Mucosa of descending colon (tissue), 3 donors: ENCODE measurements at regions of chr1 and their contacts with region 1.

Region 1: DNA sequence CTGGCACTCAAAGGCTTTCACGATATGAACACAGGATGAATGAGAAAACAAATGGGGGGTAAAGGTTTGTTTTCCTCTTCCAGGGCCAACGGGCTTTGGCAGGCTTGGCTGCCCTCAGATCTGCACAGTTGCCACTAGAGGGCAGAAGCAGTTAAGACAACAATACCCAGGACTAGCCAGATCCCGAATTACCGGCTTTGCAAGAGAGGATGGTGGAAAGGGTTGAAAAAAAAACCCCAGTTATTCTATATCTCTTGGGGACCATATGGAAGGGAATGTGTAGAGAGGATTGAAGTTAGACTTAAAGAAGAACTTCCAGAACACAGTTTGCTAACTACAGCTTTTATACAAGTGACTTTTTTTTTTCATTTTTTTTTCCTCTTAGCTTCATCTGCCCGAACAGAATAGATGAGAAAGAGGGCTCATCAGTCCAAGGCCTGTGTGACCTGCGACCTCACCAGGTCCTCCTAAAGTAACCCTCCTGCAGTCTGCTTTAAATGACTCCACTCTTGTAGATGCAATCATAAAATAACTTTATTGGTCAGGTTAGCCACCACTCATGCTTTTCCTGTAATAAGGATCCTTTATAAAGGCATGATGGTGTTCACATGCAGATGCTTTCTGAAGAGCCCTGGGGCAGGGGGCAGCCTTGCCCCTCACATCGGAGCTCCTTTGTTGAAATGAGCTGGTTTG is 10.7 kb downstream of the FMOD start:
- DNase-seq: peak; percentile 68 to 86 (median 74)
- ATAC-seq: peak; percentile 86
- H3K4me3 ChIP-seq: no peak overlapping the region
- H3K4me1 ChIP-seq: peaks cover 11% of the 10 kb centered on the region
- CTCF ChIP-seq: peak; percentile 65

Region 2: DNA sequence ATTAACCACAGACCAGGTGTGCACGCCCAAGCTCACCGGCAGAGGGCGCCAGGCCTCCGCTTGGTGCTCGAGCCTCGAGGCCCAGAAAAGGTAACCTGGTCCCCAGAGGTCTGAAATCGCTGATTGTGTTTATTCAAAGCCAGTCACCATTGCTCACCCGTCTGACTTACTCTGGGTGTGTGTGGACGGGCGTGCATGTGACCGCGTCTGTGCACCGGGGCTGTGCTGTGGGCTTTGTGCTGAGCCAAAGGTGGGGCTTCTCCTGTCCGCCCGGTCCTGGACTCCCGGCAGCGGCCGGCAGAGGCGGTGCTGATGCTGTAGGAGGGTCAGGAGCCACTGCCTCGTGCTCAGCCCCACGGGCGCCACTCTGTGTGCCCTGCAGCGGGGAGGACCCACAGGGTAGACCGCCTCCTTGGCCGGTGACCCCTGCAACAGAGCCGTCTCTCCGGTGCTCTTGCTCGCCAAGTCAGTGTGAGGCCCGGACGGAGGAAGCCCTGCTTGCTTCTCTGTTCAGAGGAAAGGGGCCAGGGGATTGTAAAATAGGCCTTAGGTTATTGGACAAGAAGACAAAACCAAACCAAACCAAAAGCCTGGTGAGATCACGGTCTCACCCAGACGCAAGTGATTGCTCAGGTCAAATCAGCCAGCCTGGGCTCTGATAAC is 66.9 kb before region 1 on chr1:
- intact Hi-C with region 1: loop called in 1 of 2 experiments (anchors 5 kb)
- DNase-seq: peak; percentile 92 to 95 (median 94)
- ATAC-seq: peak; percentile 88
- H3K4me3 ChIP-seq: no peak overlapping the region
- H3K4me1 ChIP-seq: peaks cover 34% of the 10 kb centered on the region
- CTCF ChIP-seq: peak; percentile 96

Region 3: DNA sequence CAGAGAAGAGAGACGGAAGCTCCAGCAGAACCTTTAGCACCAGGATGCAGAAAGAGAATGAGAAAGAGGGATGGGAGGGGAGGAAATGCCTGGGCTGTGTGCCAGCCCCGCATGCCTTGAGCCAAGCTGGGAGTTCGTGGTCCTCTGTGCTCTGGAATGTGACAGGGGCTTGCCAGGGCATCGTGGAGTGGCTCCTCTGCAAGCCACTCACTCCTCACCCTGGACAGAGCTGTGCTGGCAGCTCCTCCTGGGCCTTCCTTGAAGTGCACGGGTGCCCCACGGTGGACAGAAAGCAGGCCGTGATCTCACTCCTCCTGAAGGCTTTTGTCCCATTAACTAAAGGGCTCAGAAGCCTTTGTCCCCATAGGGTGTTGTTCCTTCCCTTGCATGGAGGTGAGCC is 100.5 kb after region 1 on chr1:
- intact Hi-C with region 1: loop called (anchors 2 to 5 kb)
- DNase-seq: peak; percentile 80 to 84 (median 83)
- ATAC-seq: peak; percentile 91
- H3K4me3 ChIP-seq: no peak overlapping the region
- H3K4me1 ChIP-seq: peaks cover 19% of the 10 kb centered on the region
- CTCF ChIP-seq: peak; percentile 45

Region 4: GRCh38 chr1:203480525-203481084 is 140.3 kb after region 1 on chr1:
- intact Hi-C with region 1: loop called (anchors 5 to 10 kb)
- DNase-seq: peak; percentile 85 to 90 (median 87)
- ATAC-seq: peak; percentile 96
- H3K4me3 ChIP-seq: no peak overlapping the region
- H3K4me1 ChIP-seq: peaks cover 7% of the 10 kb centered on the region
- CTCF ChIP-seq: no peak

Region 5: GRCh38 chr1:203486618-203487370 is 146.5 kb after region 1 on chr1:
- intact Hi-C with region 1: loop called (anchors 5 to 10 kb)
- DNase-seq: no peak
- ATAC-seq: no peak
- H3K4me3 ChIP-seq: no peak overlapping the region
- H3K4me1 ChIP-seq: peaks cover 9% of the 10 kb centered on the region
- CTCF ChIP-seq: no peak